Endothelial cell of umbilical vein (primary cell): ENCODE measurements at regions of chr15 and their contacts with region 1.

Region 1: DNA sequence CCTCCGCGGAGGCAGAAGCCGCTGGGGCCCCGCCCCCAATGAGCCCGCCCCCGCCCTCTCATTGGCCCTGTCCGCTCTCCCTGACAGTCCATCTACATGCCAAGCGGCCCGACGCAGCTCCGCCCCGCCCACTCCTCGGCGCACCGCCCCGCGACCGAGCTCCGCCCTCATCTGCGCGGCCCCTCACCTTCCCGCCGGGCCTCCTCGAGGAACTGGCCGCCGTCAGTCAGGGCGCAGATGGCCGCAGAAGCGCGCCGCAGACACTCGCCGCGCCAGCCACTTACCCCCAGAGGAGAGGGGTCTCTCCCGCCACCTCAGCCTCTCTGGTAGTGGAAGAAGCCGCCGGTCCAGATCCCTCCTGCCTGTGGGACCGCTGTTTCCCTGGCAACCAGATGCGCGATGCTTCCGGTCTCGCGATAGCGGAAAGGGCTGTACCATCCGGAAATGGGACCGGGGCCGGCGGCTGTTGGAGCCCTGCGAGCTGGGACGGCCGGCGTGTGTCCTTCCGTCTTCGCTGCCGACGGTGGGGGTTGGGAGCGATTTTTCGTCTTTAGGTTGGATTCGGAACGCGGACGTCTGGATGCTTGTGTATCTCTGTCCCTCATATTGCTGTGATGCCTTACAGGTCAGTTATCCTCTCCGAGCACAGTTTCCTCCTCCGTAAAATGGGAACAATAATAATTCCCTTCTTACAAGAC is at the start of gene FSIP1:
- DNase-seq: peak; percentile 97
- H3K4me3 ChIP-seq: peak within 1 kb of the TSS; percentile 87 to 98 (median 93)
- H3K27ac ChIP-seq: peak within 1 kb of the TSS; percentile 67
- H3K4me1 ChIP-seq: peaks cover 26% of the 10 kb centered on the region
- H3K27me3 ChIP-seq: no peaks in the 10 kb centered on the region
- CTCF ChIP-seq: no peak
- POLR2A ChIP-seq: peak; percentile 90
- total RNA-seq, gene FSIP1: 1.1 and 1.2 TPM in 2 replicates

Region 2: GRCh38 chr15:39631357-39631756 is 151.2 kb before region 1 on chr15:
- CTCF ChIA-PET with region 1: no interaction called
- POLR2A ChIA-PET with region 1: no interaction called
- dilution Hi-C with region 1: no loop called
- intact Hi-C with region 1: no loop called
- DNase-seq: no peak
- H3K4me3 ChIP-seq: no peak overlapping the region
- H3K27ac ChIP-seq: no peak overlapping the region
- H3K4me1 ChIP-seq: peaks cover 23% of the 10 kb centered on the region
- H3K27me3 ChIP-seq: no peaks in the 10 kb centered on the region
- CTCF ChIP-seq: no peak
- POLR2A ChIP-seq: no peak

Region 3: DNA sequence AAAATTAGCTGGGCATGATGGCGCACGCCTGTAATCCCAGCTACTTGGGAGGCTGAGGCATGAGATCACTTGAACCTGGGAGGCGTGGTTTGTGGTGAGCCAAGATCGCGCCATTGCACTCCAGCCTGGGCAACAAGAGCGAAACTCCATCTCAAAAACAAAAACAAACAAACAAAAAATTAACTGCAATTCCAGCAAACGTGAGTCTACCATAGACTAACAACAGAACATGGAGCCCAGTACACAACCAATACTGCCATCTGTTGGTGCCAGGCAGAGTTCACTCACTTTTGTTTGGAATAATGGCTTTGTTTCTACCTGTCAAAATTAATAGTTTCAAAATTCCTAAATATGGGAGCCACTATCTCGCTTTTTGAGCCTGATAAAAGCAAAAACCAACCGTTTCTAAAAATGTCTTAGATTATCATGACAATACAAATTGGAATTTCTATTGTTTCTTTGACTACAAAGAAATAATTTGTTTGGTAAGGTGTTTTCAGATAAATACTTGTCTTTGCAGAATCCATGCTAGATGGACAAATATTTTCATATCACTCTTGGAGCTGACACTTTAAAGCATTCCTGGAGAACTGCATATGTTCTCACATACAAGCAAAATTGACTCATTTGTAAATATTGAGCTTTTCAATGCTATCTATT is 92.4 kb after region 1 on chr15:
- CTCF ChIA-PET with region 1: interaction called, 49 read pairs
- POLR2A ChIA-PET with region 1: no interaction called
- dilution Hi-C with region 1: no loop called
- intact Hi-C with region 1: loop called (anchors 1 kb)
- DNase-seq: peak; percentile 67
- H3K4me3 ChIP-seq: no peak overlapping the region
- H3K27ac ChIP-seq: no peak overlapping the region
- H3K4me1 ChIP-seq: no peaks in the 10 kb centered on the region
- H3K27me3 ChIP-seq: no peaks in the 10 kb centered on the region
- CTCF ChIP-seq: peak; percentile 53 to 70
- POLR2A ChIP-seq: no peak

Region 4: DNA sequence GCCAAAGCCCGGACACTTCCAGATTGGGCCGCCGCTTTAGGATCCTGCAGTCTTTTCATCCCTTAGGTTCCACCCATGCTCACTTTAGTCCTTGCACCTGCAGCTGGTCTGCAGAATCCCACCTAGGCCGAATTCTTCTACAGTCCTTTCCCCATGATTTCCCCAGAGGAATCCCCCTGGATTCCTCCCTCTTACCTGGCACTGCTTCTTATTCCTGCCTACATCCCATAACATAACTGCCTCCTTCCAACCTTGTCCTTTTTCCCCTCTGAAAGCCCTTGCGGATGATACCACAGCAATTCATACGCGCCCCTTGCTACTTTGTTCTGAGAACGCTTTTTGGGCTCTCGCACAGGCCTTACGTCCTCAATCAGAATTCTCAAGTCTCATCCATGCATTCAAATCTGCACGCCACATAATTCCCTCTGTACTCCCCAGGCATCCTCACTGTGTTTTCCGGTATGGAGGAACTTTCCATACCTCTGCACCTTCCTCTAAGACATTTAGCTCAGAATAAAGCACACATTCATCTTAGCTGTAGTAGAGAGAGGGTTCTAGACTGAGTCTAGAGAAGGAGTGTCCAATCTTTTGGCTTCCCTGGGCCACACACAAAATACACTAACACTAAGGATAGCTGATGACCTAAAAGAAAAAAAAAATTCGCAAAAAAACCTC is 151.9 kb after region 1 on chr15:
- CTCF ChIA-PET with region 1: interaction called, 7 read pairs
- POLR2A ChIA-PET with region 1: no interaction called
- dilution Hi-C with region 1: no loop called
- intact Hi-C with region 1: loop called (anchors 1 kb)
- DNase-seq: peak; percentile 47
- H3K4me3 ChIP-seq: peak overlapping the region; percentile 33 to 77 (median 57)
- H3K27ac ChIP-seq: peak overlapping the region; percentile 92
- H3K4me1 ChIP-seq: peaks cover 22% of the 10 kb centered on the region
- H3K27me3 ChIP-seq: no peaks in the 10 kb centered on the region
- CTCF ChIP-seq: no peak
- POLR2A ChIP-seq: no peak

Region 5: GRCh38 chr15:39976291-39977274 is 194.0 kb after region 1 on chr15:
- CTCF ChIA-PET with region 1: interaction called, 6 read pairs
- POLR2A ChIA-PET with region 1: no interaction called
- dilution Hi-C with region 1: no loop called
- intact Hi-C with region 1: loop called (anchors 1 kb)
- DNase-seq: peak; percentile 70
- H3K4me3 ChIP-seq: peak overlapping the region; percentile 2 to 56 (median 37)
- H3K27ac ChIP-seq: peak overlapping the region; percentile 28
- H3K4me1 ChIP-seq: peaks cover 4% of the 10 kb centered on the region
- H3K27me3 ChIP-seq: no peaks in the 10 kb centered on the region
- CTCF ChIP-seq: peak; percentile 30 to 40
- POLR2A ChIP-seq: no peak

Region 6: DNA sequence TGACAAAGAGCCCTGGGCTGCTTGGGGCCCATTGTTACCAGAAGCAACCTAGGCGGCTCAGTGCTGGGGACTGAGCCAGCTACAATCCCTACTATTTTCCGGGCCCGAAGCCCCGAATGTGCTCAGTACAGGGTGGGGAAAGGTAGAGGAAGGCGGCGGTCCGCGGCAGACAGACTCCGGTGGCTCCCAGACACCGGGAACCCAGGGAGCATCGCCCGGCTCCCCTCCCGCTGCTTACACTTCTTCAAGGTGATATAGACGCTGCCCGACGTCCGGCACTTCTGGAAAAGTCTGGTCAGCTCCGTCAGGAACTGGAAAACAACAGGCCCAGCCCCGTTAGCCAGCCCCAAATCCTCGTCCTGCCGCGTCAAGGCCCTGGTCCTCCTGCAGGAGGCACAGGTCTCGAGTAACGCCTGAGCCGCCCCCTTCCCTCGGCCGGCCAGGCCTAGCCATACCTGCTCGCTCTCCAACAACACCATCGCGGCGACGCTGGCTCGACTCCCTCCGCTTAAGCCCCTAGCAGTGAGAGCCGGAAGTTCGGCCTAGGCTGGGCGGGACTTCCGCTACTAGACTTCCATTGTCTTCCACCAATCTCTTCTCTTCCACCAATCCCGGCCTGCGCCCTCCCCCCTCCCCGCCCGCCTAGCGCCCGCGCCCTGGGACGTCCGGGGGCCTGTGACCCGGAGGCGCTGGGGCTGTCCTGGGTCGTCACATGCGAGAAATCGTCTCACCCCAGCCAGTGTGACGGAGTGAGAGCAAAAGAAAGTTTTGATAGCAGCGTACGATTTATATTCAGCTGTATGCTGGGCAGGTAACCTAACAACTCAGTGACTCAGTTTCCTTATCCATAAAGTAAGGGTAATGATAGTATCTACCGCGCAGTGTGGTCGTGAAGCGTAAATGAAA is 256.3 kb after region 1 on chr15 and contains the start of gene SRP14:
- CTCF ChIA-PET with region 1: interaction called, 4 read pairs
- POLR2A ChIA-PET with region 1: no interaction called
- dilution Hi-C with region 1: no loop called
- intact Hi-C with region 1: loop called (anchors 2 kb)
- DNase-seq: peak; percentile 95
- H3K4me3 ChIP-seq: peak within 1 kb of the TSS; percentile 60 to 86 (median 71)
- H3K27ac ChIP-seq: peak within 1 kb of the TSS; percentile 78
- H3K4me1 ChIP-seq: peaks cover 17% of the 10 kb centered on the region
- H3K27me3 ChIP-seq: no peaks in the 10 kb centered on the region
- CTCF ChIP-seq: no peak
- POLR2A ChIP-seq: peak; percentile 96
- total RNA-seq, gene SRP14: 220 and 260 TPM in 2 replicates